ENCODE measurements at regions of chr22 and their contacts with region 1.

Region 1: DNA sequence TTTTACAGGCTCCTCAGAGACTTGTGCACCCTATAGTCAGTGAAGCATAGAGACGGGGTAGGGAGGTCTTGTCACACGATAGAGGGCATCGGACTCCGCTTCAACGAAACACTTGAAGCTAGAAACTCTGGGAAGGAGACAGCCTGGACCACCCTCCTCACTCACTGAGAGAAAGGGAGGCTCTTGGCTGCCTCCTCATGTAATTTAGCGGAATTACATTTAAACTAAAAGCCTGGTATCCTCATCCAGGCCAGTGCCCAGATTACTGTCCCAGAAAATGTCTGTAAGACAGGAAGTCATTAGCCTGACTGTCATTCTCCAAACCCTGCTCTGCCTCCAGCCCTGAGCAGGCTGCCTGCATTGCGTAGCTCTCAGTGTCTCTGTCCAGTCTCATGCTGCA is 36.0 kb downstream of the TTLL1 start:
- DNase-seq: no peak
- H3K4me3 ChIP-seq: no peak overlapping the region
- H3K27ac ChIP-seq: no peak overlapping the region
- H3K4me1 ChIP-seq: no peaks in the 10 kb centered on the region
- H3K27me3 ChIP-seq: no peaks in the 10 kb centered on the region
- CTCF ChIP-seq: peak; percentile 56

Region 2: DNA sequence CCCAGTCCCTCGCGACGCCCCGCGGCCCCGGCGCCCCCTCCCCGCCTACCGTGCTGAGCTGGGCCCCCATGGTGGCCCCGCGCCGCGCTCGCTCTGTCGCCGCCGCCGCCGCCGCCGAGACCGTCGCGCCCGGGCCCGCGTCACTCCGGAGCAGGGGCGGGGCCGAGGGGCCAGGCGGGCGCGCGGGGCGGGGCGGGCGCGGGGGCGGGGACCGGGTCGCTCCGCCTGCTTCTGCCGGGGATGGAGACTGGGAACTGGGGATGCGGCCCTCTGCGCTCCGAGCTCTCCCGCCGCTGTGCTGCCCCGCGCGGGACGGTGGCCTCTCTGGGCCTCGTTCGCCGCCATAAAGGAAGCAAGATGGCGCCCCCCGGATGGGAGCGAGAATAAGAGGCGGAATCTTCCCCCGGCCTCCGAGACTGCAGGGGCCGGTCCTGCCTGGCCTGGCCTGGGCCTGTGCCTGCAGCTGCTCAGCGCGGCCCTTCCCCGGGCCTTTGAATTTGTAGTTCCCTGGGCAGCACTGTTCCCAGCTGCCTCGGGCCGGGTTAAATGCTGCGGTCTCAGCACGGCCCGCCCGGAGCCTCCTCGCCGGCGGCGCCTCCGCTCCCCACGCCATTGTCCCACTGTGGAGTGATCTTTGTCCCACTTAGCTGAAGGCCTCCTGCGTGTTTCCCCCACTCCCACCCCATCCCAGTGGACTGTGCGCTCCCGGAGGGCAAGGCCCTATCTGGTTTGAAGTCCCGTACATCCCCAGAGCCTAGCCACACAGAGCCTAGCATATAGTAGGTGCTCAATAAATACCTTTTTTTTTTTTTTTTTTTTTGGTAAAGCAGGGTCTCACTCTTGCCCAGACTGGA is 403.7 kb before region 1 on chr22 and contains the start of gene CYB5R3:
- CTCF ChIA-PET with region 1: interaction called, 11 read pairs
- POLR2A ChIA-PET with region 1: no interaction called
- intact Hi-C with region 1: no loop called
- DNase-seq: peak; percentile 40 to 70
- H3K4me3 ChIP-seq: peak within 1 kb of the TSS; percentile 100
- H3K27ac ChIP-seq: no peak within 1 kb of the TSS
- H3K4me1 ChIP-seq: peaks cover 31% of the 10 kb centered on the region
- H3K27me3 ChIP-seq: no peaks in the 10 kb centered on the region
- CTCF ChIP-seq: no peak
- total RNA-seq, gene CYB5R3: 97.6 and 106 TPM in 2 replicates

Region 3: DNA sequence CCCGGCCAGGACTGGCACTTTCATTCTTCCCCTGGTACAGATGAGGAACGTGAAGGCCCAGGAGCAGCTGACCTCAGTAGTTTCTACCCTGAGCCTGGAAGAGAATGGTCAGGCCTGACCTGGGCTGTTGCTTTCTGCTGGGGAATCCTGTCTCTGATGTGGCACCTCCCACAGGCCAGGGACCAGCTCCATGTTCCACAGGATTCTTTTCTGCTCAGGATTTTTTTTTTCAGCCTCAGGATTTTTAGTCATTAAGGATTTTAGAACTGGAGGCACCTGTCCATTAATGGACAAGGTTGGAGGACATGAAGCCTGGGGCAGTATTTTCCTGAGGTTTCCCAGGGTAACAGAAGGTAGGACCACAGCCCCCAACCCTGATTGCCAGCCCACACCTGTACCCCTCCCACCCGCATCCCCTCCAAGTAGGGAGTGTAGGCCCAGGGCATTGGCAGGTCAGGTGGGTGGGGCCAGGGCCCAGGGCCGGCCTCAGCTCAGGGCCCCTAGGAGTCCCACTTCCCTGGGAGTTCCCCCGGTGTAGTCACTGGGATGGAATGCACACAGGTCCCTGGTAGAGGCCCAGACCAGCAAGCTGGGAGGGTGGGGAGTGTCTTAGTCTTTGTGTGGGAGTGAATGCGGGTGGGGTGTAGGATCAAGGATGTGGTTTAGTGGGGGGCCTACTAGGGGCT is 73.4 kb after region 1 on chr22:
- CTCF ChIA-PET with region 1: no interaction called
- POLR2A ChIA-PET with region 1: no interaction called
- intact Hi-C with region 1: no loop called
- DNase-seq: peak; percentile 89 to 93
- H3K4me3 ChIP-seq: peak overlapping the region; percentile 10; the same call in 1 of the 2 replicates
- H3K27ac ChIP-seq: peak overlapping the region; percentile 92
- H3K4me1 ChIP-seq: peaks cover 46% of the 10 kb centered on the region
- H3K27me3 ChIP-seq: no peaks in the 10 kb centered on the region
- CTCF ChIP-seq: no peak

Measured in PC-9 (cell line).